ENCODE measurements at regions of chr7 and their contacts with region 1.

Region 1: GRCh38 chr7:149586646-149587332 is 89.2 kb upstream of the ZNF746 start:
- DNase-seq: no peak
- ATAC-seq: no peak
- H3K4me3 ChIP-seq: no peak overlapping the region
- H3K27ac ChIP-seq: no peak overlapping the region
- H3K4me1 ChIP-seq: no peaks in the 10 kb centered on the region
- H3K27me3 ChIP-seq: no peaks in the 10 kb centered on the region
- CTCF ChIP-seq: no peak
- POLR2A ChIP-seq: no peak

Region 2: DNA sequence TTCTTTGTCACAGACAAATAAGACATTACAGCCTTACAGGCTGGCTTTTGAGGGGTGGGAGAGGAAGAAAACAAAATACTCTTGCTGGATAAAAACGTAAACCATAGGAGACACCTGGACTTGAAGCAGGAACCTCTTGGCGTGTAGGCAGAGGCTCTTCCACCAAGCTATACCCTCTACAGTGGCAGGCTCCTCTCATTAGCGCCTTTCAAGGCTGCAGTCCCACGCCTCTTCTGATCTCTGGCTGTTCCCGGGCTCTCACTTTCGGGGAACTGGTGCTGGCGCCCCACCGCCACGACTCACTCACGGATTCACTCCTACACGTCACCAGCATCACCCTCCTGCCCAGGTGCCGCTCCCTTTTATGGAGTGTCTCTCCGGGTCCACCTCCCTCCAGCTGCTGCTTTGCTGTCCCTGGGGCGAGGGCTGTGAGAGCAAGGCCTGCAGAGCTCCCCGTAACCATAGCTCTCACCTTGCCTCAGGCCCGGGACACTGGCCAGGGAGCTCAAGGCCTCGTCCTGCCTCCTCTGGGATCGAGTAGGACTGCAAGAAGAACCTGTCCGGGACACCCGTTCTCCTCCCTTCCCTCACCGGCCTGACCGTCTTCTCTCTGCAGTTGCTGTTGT is 188.5 kb before region 1 on chr7:
- intact Hi-C with region 1: no loop called
- DNase-seq: no peak
- ATAC-seq: no peak
- H3K4me3 ChIP-seq: no peak overlapping the region
- H3K27ac ChIP-seq: peak overlapping the region in 2 of 12 donors; percentile 34 to 68
- H3K4me1 ChIP-seq: no peaks in the 10 kb centered on the region
- H3K27me3 ChIP-seq: peaks cover 0 to 9% (median 4%) of the 10 kb centered on the region in 9 donors
- CTCF ChIP-seq: no peak
- POLR2A ChIP-seq: no peak

Region 3: GRCh38 chr7:149608168-149608567 is 21.4 kb after region 1 on chr7:
- intact Hi-C with region 1: loop called in 1 of 10 experiments (anchors 1 kb)
- DNase-seq: no peak
- ATAC-seq: no peak
- H3K4me3 ChIP-seq: no peak overlapping the region
- H3K27ac ChIP-seq: no peak overlapping the region
- H3K4me1 ChIP-seq: peaks cover 0 to 14% (median 6%) of the 10 kb centered on the region in 12 donors
- H3K27me3 ChIP-seq: no peaks in the 10 kb centered on the region
- CTCF ChIP-seq: no peak
- POLR2A ChIP-seq: no peak

Measured in heart left ventricle (tissue), 16 donors.